ENCODE measurements at regions of chr9 and their contacts with region 1.

Region 1: GRCh38 chr9:70043689-70044489 is at the start of gene MAMDC2:
- DNase-seq: peak; percentile 14
- H3K4me3 Mint-ChIP-seq: peak within 1 kb of the TSS; percentile 72
- H3K27ac Mint-ChIP-seq: no peak within 1 kb of the TSS
- H3K4me1 Mint-ChIP-seq: peaks cover 16% of the 10 kb centered on the region
- H3K27me3 Mint-ChIP-seq: peaks cover 23% of the 10 kb centered on the region
- CTCF ChIP-seq: no peak
- total RNA-seq, gene MAMDC2: 0.26 and 0.29 TPM in 2 replicates

Region 2: DNA sequence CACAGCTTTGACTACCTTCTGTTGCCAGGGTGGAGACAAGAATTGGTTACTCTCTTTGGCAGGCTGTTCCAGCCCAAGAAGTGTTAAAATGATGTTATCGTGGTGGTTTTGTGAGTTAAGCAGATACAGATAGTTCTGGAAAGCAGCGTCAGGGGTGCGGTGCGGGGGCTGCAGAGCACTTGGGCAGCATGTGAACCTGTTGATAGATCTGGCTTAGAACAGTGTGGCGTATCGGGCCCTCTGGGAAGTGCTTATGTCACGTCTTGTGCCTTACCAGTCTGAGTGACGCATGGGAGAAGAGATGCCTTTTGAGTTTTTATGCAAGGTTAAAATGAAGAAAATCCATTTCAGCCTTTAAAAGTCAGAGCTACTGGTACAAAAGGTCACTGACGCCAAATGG is 1182.5 kb before region 1 on chr9:
- CTCF ChIA-PET with region 1: no interaction called
- intact Hi-C with region 1: no loop called
- DNase-seq: no peak
- H3K4me3 Mint-ChIP-seq: no peak overlapping the region
- H3K27ac Mint-ChIP-seq: no peak overlapping the region
- H3K4me1 Mint-ChIP-seq: no peaks in the 10 kb centered on the region
- H3K27me3 Mint-ChIP-seq: peaks cover 9% of the 10 kb centered on the region
- CTCF ChIP-seq: no peak

Region 3: GRCh38 chr9:69981686-69982450 is 62.0 kb before region 1 on chr9:
- CTCF ChIA-PET with region 1: no interaction called
- intact Hi-C with region 1: loop called (anchors 10 kb)
- DNase-seq: no peak
- H3K4me3 Mint-ChIP-seq: no peak overlapping the region
- H3K27ac Mint-ChIP-seq: no peak overlapping the region
- H3K4me1 Mint-ChIP-seq: no peaks in the 10 kb centered on the region
- H3K27me3 Mint-ChIP-seq: peaks cover 31% of the 10 kb centered on the region
- CTCF ChIP-seq: no peak

Region 4: GRCh38 chr9:70418822-70419545 is 375.1 kb after region 1 on chr9:
- CTCF ChIA-PET with region 1: no interaction called
- intact Hi-C with region 1: no loop called
- DNase-seq: peak; percentile 77
- H3K4me3 Mint-ChIP-seq: peak overlapping the region; percentile 94
- H3K27ac Mint-ChIP-seq: peak overlapping the region; percentile 94
- H3K4me1 Mint-ChIP-seq: peaks cover 18% of the 10 kb centered on the region
- H3K27me3 Mint-ChIP-seq: peaks cover 21% of the 10 kb centered on the region
- CTCF ChIP-seq: no peak

Region 5: DNA sequence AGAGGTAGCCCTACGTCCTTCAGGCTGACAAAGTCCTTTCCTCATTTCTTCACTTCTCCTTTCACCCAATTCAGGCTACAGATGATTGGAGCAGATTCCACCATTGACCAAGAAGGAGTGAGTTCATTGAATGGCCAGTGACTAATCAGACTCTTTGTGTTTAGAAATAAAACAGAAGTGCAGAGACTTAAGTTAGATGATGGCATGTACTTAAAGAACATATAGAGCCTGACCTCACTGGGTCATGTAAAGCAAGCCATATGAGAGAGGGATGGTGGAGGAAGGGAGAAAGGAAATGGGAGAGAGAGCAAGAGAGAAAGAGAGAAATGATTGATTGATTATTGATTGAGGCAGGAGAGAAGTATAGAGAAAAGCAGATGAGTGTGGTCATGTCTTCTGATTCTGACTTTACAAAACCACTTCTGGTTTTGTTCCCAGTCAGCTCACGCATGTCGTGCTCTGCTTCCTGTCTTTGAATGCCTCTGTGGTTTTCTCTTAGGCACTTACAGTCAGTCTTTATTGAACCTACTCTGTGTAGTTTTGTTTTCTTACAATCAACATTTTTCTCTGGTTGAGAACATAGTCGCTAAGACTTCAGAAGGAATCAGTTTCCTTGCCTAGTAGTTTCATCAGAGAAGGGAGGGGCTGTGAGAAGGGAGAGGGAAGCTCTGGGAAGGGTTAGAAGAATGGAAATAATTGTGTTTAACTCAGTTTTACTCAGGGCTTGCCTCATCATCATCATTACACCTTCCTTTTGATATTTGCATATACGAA is 519.7 kb after region 1 on chr9:
- CTCF ChIA-PET with region 1: no interaction called
- intact Hi-C with region 1: no loop called
- DNase-seq: no peak
- H3K4me3 Mint-ChIP-seq: no peak overlapping the region
- H3K27ac Mint-ChIP-seq: no peak overlapping the region
- H3K4me1 Mint-ChIP-seq: no peaks in the 10 kb centered on the region
- H3K27me3 Mint-ChIP-seq: peaks cover 49% of the 10 kb centered on the region
- CTCF ChIP-seq: no peak